ENCODE measurements at regions of chr1 and their contacts with region 1.

Region 1: DNA sequence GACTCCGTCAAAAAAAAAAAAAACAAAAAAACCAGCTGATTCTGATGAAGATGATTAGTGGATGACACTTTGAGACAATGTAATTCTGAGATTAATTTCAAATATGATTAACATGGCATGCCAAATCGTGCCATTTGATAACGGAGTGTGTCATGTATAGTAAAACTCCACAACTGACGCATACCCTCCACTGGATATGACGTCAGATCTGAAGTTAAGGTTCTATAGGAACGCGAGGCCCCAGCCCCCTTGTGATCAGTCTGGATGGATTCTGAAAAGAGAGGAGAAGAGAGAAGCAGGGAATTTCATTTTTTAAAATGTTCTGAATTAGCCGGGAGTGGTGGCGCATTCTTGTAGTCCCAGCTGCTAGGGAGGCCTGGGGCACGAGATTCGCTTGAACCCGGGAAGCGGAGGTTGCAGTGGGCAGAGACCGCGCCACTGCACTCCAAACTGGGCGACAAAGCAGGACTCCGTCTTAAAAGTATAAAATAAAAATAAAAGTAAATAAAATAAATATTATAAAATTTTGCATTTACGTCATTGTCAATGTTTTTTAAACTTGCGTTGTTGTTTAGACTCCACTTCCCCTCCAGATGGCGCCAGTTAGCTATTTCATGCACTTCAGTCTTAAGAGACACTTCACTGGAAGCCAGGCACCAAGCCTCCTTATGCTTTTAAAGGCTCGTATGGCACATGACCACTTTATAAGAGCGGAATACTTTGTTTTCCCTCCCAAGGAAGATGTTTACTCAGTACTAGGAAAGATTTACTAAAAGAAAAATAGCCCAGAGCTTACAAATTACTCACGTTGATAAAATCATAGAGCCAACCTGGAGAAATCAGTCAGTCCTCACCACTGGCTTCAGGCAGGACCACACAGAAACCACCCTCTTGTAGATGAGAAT is 65.5 kb downstream of the UBE2U start:
- DNase-seq: peak; percentile 43 to 63
- H3K4me3 ChIP-seq: no peak overlapping the region
- H3K4me3 Mint-ChIP-seq: no peak overlapping the region
- H3K27ac Mint-ChIP-seq: no peak overlapping the region
- H3K4me1 ChIP-seq: no peaks in the 10 kb centered on the region
- H3K4me1 Mint-ChIP-seq: no peaks in the 10 kb centered on the region
- H3K27me3 ChIP-seq: no peaks in the 10 kb centered on the region
- H3K27me3 Mint-ChIP-seq: no peaks in the 10 kb centered on the region
- CTCF ChIP-seq: peak; percentile 58 to 70

Region 2: GRCh38 chr1:64038965-64039926 is 229.7 kb before region 1 on chr1:
- CTCF ChIA-PET with region 1: no interaction called
- POLR2A ChIA-PET with region 1: no interaction called
- intact Hi-C with region 1: no loop called
- DNase-seq: no peak
- H3K4me3 ChIP-seq: no peak overlapping the region
- H3K4me3 Mint-ChIP-seq: no peak overlapping the region
- H3K27ac Mint-ChIP-seq: no peak overlapping the region
- H3K4me1 ChIP-seq: no peaks in the 10 kb centered on the region
- H3K4me1 Mint-ChIP-seq: no peaks in the 10 kb centered on the region
- H3K27me3 ChIP-seq: no peaks in the 10 kb centered on the region
- H3K27me3 Mint-ChIP-seq: no peaks in the 10 kb centered on the region
- CTCF ChIP-seq: no peak

Region 3: GRCh38 chr1:64487061-64487460 is 218.2 kb after region 1 on chr1:
- CTCF ChIA-PET with region 1: interaction called, 3 read pairs
- POLR2A ChIA-PET with region 1: no interaction called
- intact Hi-C with region 1: loop called (anchors 2 kb)
- DNase-seq: no peak
- H3K4me3 ChIP-seq: no peak overlapping the region
- H3K4me3 Mint-ChIP-seq: no peak overlapping the region
- H3K27ac Mint-ChIP-seq: no peak overlapping the region
- H3K4me1 ChIP-seq: peaks cover 13% of the 10 kb centered on the region; the same call in 1 of the 2 replicates
- H3K4me1 Mint-ChIP-seq: peaks cover 19% of the 10 kb centered on the region
- H3K27me3 ChIP-seq: no peaks in the 10 kb centered on the region
- H3K27me3 Mint-ChIP-seq: no peaks in the 10 kb centered on the region
- CTCF ChIP-seq: no peak

Region 4: DNA sequence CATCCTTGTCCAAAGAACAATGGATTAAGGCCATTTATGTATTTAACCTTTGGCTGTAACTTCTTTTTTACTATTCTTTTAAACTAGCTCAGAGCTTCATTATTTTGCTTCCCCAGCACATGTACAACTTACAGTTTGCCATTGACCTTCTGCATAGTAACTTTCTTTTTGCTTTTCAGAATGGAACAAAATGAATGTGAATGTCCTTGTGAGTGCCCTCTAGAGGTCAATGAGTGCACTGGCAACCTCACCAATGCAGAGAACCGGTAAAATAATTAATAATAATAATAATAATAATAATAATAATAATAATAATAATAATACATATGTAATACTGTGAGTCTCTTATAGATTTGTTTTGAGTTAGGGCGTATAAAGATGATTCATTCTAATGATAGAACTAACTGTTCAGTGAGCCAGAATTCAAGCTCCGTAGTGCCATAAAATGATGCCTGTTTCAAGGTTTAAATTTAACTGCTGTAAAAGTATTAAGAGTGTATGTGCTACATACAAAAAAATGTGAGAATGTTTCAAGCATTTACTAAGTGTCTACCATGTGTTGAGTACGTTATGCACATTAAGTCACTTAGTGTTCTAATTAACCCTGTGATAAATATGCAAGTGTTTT is 406.9 kb after region 1 on chr1:
- CTCF ChIA-PET with region 1: no interaction called
- POLR2A ChIA-PET with region 1: no interaction called
- intact Hi-C with region 1: loop called (anchors 2 kb)
- DNase-seq: peak in 1 of 2 experiments; percentile 3
- H3K4me3 ChIP-seq: no peak overlapping the region
- H3K4me3 Mint-ChIP-seq: no peak overlapping the region
- H3K27ac Mint-ChIP-seq: no peak overlapping the region
- H3K4me1 ChIP-seq: no peaks in the 10 kb centered on the region
- H3K4me1 Mint-ChIP-seq: no peaks in the 10 kb centered on the region
- H3K27me3 ChIP-seq: no peaks in the 10 kb centered on the region
- H3K27me3 Mint-ChIP-seq: no peaks in the 10 kb centered on the region
- CTCF ChIP-seq: peak; percentile 29 to 52

Region 5: GRCh38 chr1:64744492-64745180 is 475.7 kb after region 1 on chr1 and contains the start of gene RAVER2:
- CTCF ChIA-PET with region 1: no interaction called
- POLR2A ChIA-PET with region 1: no interaction called
- intact Hi-C with region 1: loop called (anchors 2 kb)
- DNase-seq: peak; percentile 81
- H3K4me3 ChIP-seq: peak within 1 kb of the TSS; percentile 67
- H3K4me3 Mint-ChIP-seq: peak within 1 kb of the TSS; percentile 84
- H3K27ac Mint-ChIP-seq: peak within 1 kb of the TSS; percentile 86
- H3K4me1 ChIP-seq: no peaks in the 10 kb centered on the region
- H3K4me1 Mint-ChIP-seq: peaks cover 11% of the 10 kb centered on the region
- H3K27me3 ChIP-seq: no peaks in the 10 kb centered on the region
- H3K27me3 Mint-ChIP-seq: no peaks in the 10 kb centered on the region
- CTCF ChIP-seq: peak in 1 of 2 experiments; percentile 48
- total RNA-seq, gene RAVER2: 12.7 and 12.9 TPM in 2 replicates

Measured in Caco-2 (cell line).